Gastrocnemius medialis (tissue), 4 donors: ENCODE measurements at regions of chr22 and their contacts with region 1.

Region 1: GRCh38 chr22:45240810-45241631 is at the start of gene KIAA0930:
- DNase-seq: peak; percentile 69 to 70
- ATAC-seq: peak; percentile 69 to 81
- H3K4me3 ChIP-seq: peak within 1 kb of the TSS; percentile 59 to 83 (median 72)
- H3K27ac ChIP-seq: peak within 1 kb of the TSS; percentile 57 to 75 (median 70)
- H3K4me1 ChIP-seq: peaks cover 8 to 15% of the 10 kb centered on the region in 2 donors
- H3K27me3 ChIP-seq: no peaks in the 10 kb centered on the region
- CTCF ChIP-seq: no peak
- POLR2A ChIP-seq: no peak
- total RNA-seq, gene KIAA0930: 45.1 to 99.9 (median 53.7) TPM

Region 2: GRCh38 chr22:45163451-45164269 is 77.4 kb before region 1 on chr22 and contains the start of gene NUP50:
- in situ Hi-C with region 1: no loop called
- intact Hi-C with region 1: loop called (anchors 2 kb)
- DNase-seq: peak; percentile 91 to 96
- ATAC-seq: peak; percentile 89 to 94
- H3K4me3 ChIP-seq: peak within 1 kb of the TSS; percentile 87 to 97 (median 91)
- H3K27ac ChIP-seq: peak within 1 kb of the TSS; percentile 88 to 93 (median 90)
- H3K4me1 ChIP-seq: peaks cover 34% of the 10 kb centered on the region in 2 donors
- H3K27me3 ChIP-seq: no peaks in the 10 kb centered on the region
- CTCF ChIP-seq: peak in 4 of 5 experiments; percentile 5 to 23 (median 17)
- POLR2A ChIP-seq: peak; percentile 86 to 90
- total RNA-seq, gene NUP50: 18.0 to 30.6 (median 26.3) TPM

Region 3: DNA sequence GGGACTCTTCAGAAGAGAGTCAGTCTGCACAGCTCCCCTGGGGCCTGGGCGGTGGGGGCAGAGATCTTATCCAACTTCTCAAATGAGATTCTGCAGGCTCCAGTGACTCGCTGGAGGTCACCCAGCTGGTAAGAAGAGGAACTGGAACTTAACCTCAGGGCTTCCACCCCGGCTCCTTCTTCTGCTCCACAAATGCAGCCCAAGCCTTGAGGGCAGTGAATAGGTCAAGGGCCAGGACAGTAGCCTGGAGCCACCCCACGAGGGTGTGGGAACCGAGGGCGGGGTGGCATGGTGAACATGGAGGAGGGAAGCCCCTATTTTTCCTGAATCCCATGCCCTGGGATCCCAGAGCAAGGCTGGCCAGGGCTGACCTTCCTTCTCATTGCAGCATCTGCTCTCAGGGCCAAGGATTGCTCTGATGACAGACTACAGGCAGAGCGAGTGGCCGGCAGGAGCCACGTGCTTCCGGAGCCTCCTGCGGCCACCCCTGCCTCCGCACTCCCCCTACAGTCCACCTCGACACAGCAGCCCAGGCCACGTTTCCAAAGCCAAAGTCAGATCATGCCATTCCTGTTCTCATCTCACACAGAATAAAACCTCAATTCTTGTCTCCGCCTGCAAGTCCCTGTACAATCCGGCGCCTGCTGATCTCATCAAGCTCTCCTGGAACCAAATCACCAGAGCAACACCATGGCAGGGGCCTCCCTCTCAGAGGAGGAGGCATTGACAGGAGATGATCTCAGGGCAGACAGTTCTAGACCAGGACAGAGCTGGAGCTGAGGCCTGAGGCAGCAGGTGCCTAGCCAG is 22.6 kb after region 1 on chr22:
- in situ Hi-C with region 1: no loop called
- intact Hi-C with region 1: loop called (anchors 1 kb)
- DNase-seq: peak; percentile 60 to 79
- ATAC-seq: peak; percentile 86 to 95
- H3K4me3 ChIP-seq: no peak overlapping the region
- H3K27ac ChIP-seq: peak overlapping the region in 3 of 4 donors; percentile 32 to 59 (median 53)
- H3K4me1 ChIP-seq: peaks cover 12 to 15% of the 10 kb centered on the region in 2 donors
- H3K27me3 ChIP-seq: no peaks in the 10 kb centered on the region
- CTCF ChIP-seq: peak; percentile 42 to 72 (median 66)
- POLR2A ChIP-seq: no peak